Activated CD4-positive, alpha-beta T cell treated with anti-CD3 and anti-CD28 coated beads for 36 hours (primary cell): ENCODE measurements at regions of chr11 and their contacts with region 1.

Region 1: GRCh38 chr11:107858217-107859070 is at the start of gene SLC35F2:
- DNase-seq: peak; percentile 86
- ATAC-seq: peak; percentile 88
- H3K4me3 Mint-ChIP-seq: peak within 1 kb of the TSS; percentile 92
- H3K27ac Mint-ChIP-seq: peak within 1 kb of the TSS; percentile 94
- H3K4me1 Mint-ChIP-seq: peaks cover 31% of the 10 kb centered on the region
- H3K27me3 Mint-ChIP-seq: no peaks in the 10 kb centered on the region
- total RNA-seq, gene SLC35F2: 24.5 to 25.5 TPM

Region 2: DNA sequence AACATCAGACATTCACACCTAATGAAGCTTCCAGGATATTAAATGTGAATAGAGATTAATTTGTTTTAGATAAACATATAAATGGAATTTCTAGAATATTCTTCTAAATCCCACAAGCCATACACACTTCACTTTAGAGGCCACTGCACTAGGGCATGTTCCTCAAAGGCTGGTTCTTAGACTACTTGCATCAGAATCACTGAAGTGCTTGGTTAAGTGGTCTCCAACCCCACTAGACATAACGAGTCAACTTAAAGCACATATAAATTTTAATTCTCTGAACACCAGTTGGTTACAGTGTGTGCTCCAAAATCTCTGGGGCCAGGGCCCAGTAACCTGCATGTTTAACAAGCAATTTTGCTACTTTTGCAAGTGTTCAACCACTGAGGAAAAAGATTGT is 285.0 kb before region 1 on chr11:
- CTCF ChIA-PET with region 1: no interaction called
- POLR2A ChIA-PET with region 1: no interaction called
- intact Hi-C with region 1: no loop called
- DNase-seq: no peak
- ATAC-seq: no peak
- H3K4me3 Mint-ChIP-seq: no peak overlapping the region
- H3K27ac Mint-ChIP-seq: no peak overlapping the region
- H3K4me1 Mint-ChIP-seq: no peaks in the 10 kb centered on the region
- H3K27me3 Mint-ChIP-seq: peaks cover 2% of the 10 kb centered on the region

Region 3: GRCh38 chr11:107741044-107741823 is 117.2 kb before region 1 on chr11:
- CTCF ChIA-PET with region 1: no interaction called
- POLR2A ChIA-PET with region 1: no interaction called
- intact Hi-C with region 1: no loop called
- DNase-seq: peak; percentile 30
- ATAC-seq: peak; percentile 72
- H3K4me3 Mint-ChIP-seq: no peak overlapping the region
- H3K27ac Mint-ChIP-seq: no peak overlapping the region
- H3K4me1 Mint-ChIP-seq: no peaks in the 10 kb centered on the region
- H3K27me3 Mint-ChIP-seq: peaks cover 36% of the 10 kb centered on the region

Region 4: GRCh38 chr11:107799218-107799859 is 59.1 kb before region 1 on chr11:
- CTCF ChIA-PET with region 1: no interaction called
- POLR2A ChIA-PET with region 1: no interaction called
- intact Hi-C with region 1: loop called (anchors 1 to 5 kb)
- DNase-seq: peak; percentile 82
- ATAC-seq: peak; percentile 81
- H3K4me3 Mint-ChIP-seq: no peak overlapping the region
- H3K27ac Mint-ChIP-seq: no peak overlapping the region
- H3K4me1 Mint-ChIP-seq: no peaks in the 10 kb centered on the region
- H3K27me3 Mint-ChIP-seq: no peaks in the 10 kb centered on the region

Region 5: GRCh38 chr11:107928046-107928766 is 69.8 kb after region 1 on chr11 and contains the start of gene RAB39A:
- CTCF ChIA-PET with region 1: no interaction called
- POLR2A ChIA-PET with region 1: no interaction called
- intact Hi-C with region 1: loop called in 1 of 2 experiments (anchors 1 kb)
- DNase-seq: peak; percentile 84
- ATAC-seq: peak; percentile 87
- H3K4me3 Mint-ChIP-seq: peak within 1 kb of the TSS; percentile 61
- H3K27ac Mint-ChIP-seq: no peak within 1 kb of the TSS
- H3K4me1 Mint-ChIP-seq: peaks cover 12% of the 10 kb centered on the region
- H3K27me3 Mint-ChIP-seq: peaks cover 43% of the 10 kb centered on the region
- total RNA-seq, gene RAB39A: 0.12 to 0.16 TPM